Mammary epithelial cell (primary cell): ENCODE measurements at regions of chr10 and their contacts with region 1.

Region 1: DNA sequence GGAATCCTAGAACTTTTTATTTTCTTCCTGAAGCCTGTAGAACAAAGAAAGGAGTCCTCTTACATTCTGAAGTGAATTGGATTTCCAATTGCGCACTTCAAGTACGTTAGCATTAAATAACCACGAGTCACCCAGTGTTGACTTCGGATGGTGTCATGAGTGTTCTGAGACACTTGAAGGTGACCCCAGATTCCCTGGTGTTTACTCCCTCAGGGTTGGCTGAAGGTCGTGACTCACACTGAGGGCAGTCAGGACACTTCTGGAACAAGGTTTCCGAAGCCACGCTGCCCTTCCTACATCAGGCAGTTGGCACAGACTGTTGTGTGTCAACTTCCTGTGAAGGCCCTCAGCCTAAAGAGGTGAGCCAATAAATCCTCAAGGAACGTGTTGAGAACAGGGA is 186.6 kb upstream of the CELF2 start:
- DNase-seq: peak; percentile 49
- H3K4me3 ChIP-seq: no peak overlapping the region
- H3K27ac ChIP-seq: peak overlapping the region; percentile 86
- H3K4me1 ChIP-seq: peaks cover 16% of the 10 kb centered on the region
- H3K27me3 ChIP-seq: no peaks in the 10 kb centered on the region
- CTCF ChIP-seq: no peak

Region 2: GRCh38 chr10:10786109-10787090 is 44.7 kb before region 1 on chr10:
- CTCF ChIA-PET with region 1: no interaction called
- dilution Hi-C with region 1: no loop called
- in situ Hi-C with region 1: no loop called
- intact Hi-C with region 1: loop called (anchors 2 kb)
- DNase-seq: peak; percentile 71
- H3K4me3 ChIP-seq: no peak overlapping the region
- H3K27ac ChIP-seq: peak overlapping the region; percentile 54
- H3K4me1 ChIP-seq: peaks cover 19% of the 10 kb centered on the region
- H3K27me3 ChIP-seq: no peaks in the 10 kb centered on the region
- CTCF ChIP-seq: no peak

Region 3: DNA sequence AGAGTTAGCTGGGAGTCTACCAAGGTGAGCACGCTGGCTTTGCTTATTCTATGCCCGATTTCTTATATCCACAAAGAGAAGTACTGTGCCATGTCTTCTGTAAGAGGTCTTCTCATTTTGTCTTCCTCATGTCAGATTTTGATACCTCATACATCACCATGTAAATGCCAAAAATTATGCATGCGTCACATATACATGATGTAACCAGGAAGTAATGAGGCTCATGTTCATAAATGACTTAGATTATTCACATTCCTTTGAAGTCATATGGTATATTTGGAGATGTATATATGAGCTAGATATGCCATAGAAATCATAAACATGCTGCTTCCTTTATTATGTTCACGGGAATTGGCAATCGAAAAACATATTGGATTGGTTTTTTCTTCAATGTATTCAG is 88.9 kb after region 1 on chr10:
- CTCF ChIA-PET with region 1: no interaction called
- dilution Hi-C with region 1: no loop called
- in situ Hi-C with region 1: no loop called
- intact Hi-C with region 1: no loop called
- DNase-seq: no peak
- H3K4me3 ChIP-seq: no peak overlapping the region
- H3K27ac ChIP-seq: no peak overlapping the region
- H3K4me1 ChIP-seq: no peaks in the 10 kb centered on the region
- H3K27me3 ChIP-seq: no peaks in the 10 kb centered on the region
- CTCF ChIP-seq: no peak

Region 4: DNA sequence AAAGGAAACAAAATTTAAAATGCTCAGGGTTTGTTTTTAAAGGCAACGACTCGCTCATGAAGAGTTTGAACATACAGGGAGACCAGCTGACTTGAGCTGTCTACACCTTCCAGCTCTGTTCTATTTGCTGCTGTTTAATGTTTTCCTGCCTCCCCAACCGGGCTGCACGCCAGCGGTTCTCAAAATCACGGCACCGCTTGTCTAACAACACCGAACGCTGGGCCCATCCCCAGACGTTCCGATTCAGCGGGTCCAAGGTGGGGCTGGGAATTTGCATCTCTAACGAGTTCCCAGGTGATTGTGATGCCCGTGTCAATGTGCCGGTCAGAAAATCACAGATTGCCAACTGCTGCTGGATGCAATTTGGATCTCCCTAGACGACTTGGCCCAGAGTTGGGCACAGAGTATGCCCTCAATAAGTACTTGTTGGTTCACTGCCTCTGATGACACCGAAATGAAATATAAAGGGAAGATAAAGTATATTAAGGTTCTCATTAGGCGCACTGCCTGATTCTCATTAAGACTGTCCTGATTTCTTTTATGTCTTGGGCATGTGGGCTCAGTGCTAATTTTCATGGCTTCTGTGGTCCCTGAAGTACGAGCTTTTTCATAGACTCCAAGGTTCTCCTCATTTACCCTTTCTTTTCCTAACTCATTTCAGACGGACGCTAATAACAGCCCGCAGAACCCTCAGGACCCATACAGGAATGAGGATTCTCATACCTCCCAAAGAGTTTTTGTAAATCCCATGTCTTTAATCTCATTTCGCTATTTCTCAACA is 215.1 kb after region 1 on chr10:
- CTCF ChIA-PET with region 1: no interaction called
- dilution Hi-C with region 1: no loop called
- in situ Hi-C with region 1: no loop called
- intact Hi-C with region 1: no loop called
- DNase-seq: no peak
- H3K4me3 ChIP-seq: no peak overlapping the region
- H3K27ac ChIP-seq: no peak overlapping the region
- H3K4me1 ChIP-seq: no peaks in the 10 kb centered on the region
- H3K27me3 ChIP-seq: no peaks in the 10 kb centered on the region
- CTCF ChIP-seq: no peak